Dendritic cell treated with granulocyte-macrophage colony-stimulating factor and Interleukin-4, amounts not matched to agents 40 ng/mL and 50 ng/mL, for 4 days (primary cell): ENCODE measurements at regions of chr9 and their contacts with region 1.

Region 1: DNA sequence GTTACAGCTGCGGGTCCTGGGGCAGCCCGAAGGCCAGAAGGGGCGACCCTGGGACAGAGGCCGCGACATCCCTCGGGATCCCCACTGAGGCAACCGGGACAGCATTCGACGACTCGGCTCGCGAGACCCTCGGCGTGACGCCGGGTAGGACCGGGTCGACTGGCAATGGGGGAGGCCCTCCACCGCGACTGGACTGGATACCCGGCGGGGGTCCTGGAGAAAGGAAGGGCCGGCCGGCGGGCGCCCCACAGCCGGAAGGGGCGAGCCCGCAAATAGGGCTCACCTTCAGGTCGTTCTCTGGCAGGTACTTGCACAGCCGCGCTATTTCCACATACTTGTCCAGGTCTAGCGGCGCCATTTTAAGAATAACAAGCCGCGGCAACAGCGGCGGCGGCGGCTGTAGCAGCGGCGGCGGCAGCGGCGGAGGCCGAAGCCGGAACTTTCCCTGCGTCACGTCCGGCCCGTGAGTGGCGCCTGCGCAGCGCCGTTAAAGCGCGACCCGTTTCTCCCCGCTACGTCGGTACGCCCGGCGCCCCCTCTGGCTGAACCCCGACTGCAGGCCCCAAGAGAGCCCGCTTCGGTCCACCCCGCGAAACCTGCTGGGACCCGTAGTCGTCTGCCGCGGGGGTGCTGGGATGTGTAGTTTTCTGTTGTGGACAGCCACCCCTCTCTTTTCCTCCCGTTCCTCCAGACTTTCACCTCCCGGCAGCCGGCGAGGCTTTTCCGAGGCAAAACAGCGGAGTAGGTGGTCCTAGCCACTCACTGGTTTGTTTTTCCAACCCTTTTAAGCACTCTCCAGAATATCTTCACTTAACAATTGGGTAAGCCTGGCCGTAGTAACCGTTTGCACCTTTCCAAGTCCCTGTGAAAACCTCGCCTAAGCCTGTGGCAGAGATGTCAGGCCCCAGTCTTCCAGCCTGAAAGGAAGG is at the start of gene PPP6C:
- H3K4me3 Mint-ChIP-seq: peak within 1 kb of the TSS; percentile 91
- H3K27ac Mint-ChIP-seq: peak within 1 kb of the TSS; percentile 91
- H3K4me1 Mint-ChIP-seq: peaks cover 30% of the 10 kb centered on the region
- H3K27me3 Mint-ChIP-seq: no peaks in the 10 kb centered on the region

Region 2: DNA sequence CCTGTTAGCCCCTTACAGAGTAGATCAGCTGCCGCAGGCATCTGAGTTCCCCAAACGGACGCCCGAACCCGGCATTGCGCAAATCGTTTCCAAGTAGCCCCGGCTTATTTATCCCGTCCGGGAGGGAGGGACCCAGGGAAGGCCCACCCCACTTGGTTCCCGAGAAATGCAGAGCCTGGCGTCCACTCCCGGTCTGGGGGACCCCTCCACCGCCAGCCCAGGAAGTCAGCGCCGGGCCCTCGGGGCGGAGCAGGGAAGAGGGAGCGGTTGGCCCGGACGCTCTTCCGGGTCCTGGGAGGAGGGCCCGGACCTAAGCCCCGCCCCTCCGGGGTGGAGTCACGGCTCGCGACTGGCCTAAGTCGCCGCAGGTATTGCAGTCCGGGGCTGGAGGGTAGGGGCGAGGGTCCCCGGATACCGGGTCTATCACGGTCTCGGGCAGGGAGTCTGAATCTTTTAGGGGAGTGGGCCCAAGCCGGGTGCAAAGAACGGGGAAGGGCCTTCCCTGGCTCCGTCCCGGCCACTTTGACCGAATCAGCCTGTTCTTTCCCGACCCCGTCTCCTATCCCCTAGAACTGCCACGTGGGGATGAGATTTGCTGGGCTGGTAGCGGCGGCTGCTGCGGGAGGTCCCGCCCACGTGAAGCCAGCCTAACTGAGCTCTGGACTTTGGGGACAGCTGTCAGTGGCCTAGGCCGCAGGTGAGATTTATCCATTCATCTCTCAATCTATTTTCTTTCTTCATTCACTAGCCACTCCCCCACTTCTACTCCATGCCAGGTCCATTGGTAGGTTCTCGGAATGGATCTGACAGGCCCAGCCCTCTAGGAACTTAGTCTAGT is 10.8 kb after region 1 on chr9 and contains the start of gene RABEPK:
- intact Hi-C with region 1: loop called (anchors 1 kb)
- H3K4me3 Mint-ChIP-seq: peak within 1 kb of the TSS; percentile 90
- H3K27ac Mint-ChIP-seq: peak within 1 kb of the TSS; percentile 94
- H3K4me1 Mint-ChIP-seq: peaks cover 27% of the 10 kb centered on the region
- H3K27me3 Mint-ChIP-seq: peaks cover 4% of the 10 kb centered on the region

Region 3: DNA sequence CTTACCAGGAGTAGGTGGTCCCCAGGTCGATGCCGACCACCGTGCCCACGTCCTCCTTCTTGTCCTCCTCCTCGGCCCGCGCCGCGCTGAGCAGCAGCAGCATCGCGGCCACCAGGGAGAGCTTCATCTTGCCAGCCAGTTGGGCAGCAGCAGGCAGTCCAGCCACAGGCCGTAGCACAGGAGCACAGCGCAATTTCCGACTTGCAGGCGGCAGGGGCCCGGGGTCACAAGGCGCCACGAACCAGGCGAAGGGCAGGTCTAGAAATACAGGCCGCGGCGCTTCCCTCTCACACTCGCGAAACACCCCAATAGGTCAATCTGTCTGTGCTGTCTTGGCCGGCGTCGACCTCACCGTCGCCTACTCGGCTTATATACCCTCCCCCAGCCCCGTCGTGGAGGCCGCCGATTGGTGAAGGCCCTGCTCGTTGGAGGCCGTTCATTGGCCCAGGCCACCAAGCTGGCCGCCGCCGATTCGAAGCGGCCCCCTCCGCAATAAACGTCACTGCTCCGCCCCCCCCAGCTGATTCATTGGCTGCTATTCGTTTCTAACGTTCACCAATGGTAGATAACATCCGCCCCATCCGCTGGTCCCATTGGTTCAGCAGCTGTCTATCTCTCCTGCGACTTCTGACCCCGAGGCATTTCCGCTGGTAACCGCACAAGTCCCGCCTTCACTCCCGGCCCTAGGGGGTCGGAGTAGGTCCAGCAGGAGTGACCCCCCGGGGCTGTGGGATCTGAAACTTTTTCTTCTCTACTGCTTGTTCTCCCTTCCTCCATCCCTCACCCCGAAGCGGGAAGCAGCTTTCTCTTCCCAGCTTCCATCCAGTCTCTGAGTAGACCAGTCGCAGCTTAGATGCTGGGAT is 51.6 kb after region 1 on chr9 and contains the start of gene HSPA5:
- intact Hi-C with region 1: loop called (anchors 1 kb)
- H3K4me3 Mint-ChIP-seq: peak within 1 kb of the TSS; percentile 96
- H3K27ac Mint-ChIP-seq: peak within 1 kb of the TSS; percentile 100
- H3K4me1 Mint-ChIP-seq: peaks cover 31% of the 10 kb centered on the region
- H3K27me3 Mint-ChIP-seq: no peaks in the 10 kb centered on the region